Colonic mucosa (tissue), 4 donors: ENCODE measurements at regions of chr22 and their contacts with region 1.

Region 1: DNA sequence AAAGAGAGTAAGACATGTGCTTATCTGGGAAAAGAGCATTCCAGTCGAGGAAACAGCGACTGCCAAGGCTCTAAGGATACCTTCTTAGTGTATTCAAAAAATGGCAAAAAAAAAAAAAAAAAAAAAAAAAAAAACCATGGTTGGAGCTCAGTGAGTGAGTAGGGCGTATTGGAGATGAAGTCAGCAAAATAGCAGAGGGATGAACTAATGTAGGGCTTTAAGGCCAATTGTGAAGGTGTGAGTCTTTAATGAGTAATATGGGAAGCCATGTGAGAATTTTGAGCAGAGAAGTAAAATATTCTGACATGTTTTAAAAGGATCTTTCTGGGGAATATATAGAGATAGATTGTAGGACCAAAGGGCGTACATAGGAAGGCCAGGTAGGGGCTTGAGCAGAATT is 498.6 kb upstream of the ISX start:
- DNase-seq: no peak
- H3K4me3 ChIP-seq: no peak overlapping the region
- H3K27ac ChIP-seq: no peak overlapping the region
- H3K4me1 ChIP-seq: no peaks in the 10 kb centered on the region
- H3K27me3 ChIP-seq: no peaks in the 10 kb centered on the region
- CTCF ChIP-seq: no peak

Region 2: DNA sequence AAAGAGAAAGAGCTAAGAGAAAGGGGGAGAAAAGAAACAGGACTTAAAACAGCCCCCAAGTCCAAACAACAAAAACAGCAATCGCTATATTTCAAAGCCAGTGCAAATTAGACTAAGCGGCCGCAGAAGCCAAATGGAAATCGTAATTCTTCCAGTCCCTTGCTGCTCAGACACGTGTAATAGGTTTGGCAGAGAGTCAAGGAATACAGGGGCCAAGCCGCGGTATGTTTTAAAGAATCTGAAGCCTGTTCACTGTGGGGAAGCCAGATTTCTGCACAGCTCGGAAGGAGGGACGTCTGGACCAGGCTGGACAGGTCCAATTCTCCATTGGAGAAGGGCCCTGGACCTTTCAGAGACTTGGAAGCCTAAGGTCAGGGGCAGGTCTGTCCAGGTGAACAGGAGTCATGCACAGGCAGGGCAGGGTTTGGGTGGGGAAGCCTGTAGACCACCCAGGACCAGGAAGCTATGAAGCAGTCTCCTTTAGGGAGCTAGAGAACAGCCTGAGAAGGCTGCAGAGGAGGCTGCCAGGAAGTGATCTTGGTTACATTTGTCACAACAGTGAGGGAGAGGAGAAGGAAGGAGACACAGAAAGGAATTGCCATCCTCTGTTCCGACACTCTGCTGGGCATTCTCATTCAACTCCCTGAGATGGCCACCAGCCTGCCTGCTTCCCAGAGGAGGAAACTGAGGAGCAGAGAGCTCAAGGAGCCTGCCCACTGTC is 233.1 kb after region 1 on chr22:
- intact Hi-C with region 1: no loop called
- DNase-seq: no peak
- H3K4me3 ChIP-seq: no peak overlapping the region
- H3K27ac ChIP-seq: no peak overlapping the region
- H3K4me1 ChIP-seq: no peaks in the 10 kb centered on the region
- H3K27me3 ChIP-seq: no peaks in the 10 kb centered on the region
- CTCF ChIP-seq: no peak

Region 3: DNA sequence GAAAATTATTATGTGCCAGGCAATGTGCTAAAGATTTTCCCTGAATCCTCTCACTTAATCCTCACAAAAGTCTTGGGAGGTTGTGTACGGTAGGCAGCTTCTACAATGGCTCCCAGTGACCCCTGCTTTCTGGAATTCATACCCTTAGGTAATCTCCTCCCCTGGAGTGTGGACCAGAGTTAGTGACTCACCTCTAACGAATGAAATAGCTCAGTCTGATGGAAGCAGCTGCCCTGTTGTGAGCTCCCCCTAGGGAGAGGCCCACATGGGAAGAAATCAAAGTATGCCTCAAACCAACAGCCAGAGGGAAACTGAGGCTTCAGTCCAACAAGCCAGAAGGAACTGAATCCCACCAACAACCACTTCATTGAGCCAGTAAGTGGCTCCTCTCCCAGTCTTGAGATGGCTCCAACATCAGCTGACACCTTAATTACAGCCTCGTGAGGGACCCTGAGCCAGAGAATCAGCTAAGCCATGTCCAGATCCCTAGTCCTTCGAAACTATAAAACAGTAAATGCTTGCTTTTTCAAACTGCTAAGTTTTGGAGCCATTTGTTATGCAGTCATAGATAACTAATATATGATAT is 399.7 kb after region 1 on chr22:
- intact Hi-C with region 1: loop called (anchors 10 kb)
- DNase-seq: no peak
- H3K4me3 ChIP-seq: no peak overlapping the region
- H3K27ac ChIP-seq: no peak overlapping the region
- H3K4me1 ChIP-seq: no peaks in the 10 kb centered on the region
- H3K27me3 ChIP-seq: no peaks in the 10 kb centered on the region
- CTCF ChIP-seq: no peak